Left lung (tissue), 14 donors: ENCODE measurements at regions of chr13 and their contacts with region 1.

Region 1: DNA sequence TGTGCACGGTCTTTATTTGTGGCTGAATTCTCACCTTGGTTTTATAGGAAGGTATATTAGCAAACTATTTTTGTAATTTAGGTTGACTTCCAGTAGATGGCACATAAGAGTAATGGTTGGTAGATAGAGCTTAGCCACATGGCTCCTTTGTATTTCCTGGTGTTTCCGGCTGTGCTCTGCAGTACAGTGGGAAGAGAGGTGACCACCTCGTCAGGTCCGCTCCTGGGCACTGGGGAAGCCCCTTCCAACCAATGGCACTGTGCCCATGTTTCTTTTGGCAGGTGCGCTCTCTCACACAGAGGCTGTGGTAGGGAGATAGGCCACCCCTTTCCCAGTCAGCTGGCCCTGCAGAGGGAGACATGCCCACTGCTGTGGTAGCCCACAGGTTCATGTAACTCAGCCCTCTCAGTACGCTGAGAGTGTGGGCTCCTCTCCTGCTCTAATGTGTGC is 74.3 kb upstream of the ATP12A start:
- DNase-seq: no peak
- ATAC-seq: peak; percentile 98
- H3K4me3 ChIP-seq: no peak overlapping the region
- H3K27ac ChIP-seq: no peak overlapping the region
- H3K4me1 ChIP-seq: no peaks in the 10 kb centered on the region
- H3K27me3 ChIP-seq: no peaks in the 10 kb centered on the region
- CTCF ChIP-seq: peak in 1 of 2 donors; percentile 41

Region 2: DNA sequence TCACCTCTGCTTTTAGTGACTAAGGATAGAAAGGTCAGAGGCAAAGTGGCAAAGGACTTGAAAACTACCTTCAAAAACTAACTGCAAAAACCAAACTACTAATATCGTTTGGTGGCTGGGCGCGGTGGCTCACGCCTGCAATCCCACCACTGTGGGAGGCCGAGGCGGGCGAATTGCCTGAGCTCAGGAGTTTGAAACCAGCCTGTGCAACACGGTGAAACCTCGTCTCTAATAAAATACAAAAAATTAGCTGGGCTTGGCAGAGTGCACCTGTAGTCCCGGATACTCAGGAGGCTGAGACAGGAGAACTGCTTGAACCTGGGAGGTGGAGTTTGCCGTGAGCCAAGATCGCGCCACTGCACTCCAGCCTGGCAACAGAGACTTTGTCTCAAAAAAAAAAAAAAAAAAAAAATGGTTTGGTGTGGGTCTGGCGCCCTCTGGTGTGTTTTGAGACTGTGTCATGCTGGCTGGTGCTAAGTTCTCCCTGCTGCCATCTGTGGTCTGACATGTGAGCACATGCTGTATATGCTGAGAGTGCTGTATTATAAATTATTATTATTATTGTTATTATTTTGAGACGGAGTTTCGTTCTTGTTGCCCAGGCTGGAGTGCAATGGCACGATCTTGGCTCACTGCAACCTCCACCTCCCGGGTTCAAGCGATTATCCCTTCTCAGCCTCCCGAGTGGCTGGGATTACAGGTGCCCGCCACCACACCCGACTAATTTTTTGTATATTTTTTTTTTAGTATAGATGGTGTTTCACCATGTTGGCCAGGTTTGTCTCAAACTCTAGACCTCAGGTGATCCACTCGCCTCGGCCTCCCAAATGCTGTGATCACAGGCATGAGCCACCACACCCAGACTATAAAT is 122.0 kb after region 1 on chr13:
- intact Hi-C with region 1: loop called in 1 of 2 experiments (anchors 10 kb)
- DNase-seq: peak in 3 of 4 donors; percentile 42 to 82 (median 61)
- ATAC-seq: peak; percentile 100
- H3K4me3 ChIP-seq: no peak overlapping the region
- H3K27ac ChIP-seq: no peak overlapping the region
- H3K4me1 ChIP-seq: no peaks in the 10 kb centered on the region
- H3K27me3 ChIP-seq: no peaks in the 10 kb centered on the region
- CTCF ChIP-seq: peak; percentile 58 to 75